PC-9 (cell line): ENCODE measurements at regions of chr7 and their contacts with region 1.

Region 1: GRCh38 chr7:144158861-144159260 is 24.4 kb upstream of the CTAGE4 start:
- DNase-seq: peak in 1 of 2 experiments; percentile 26
- H3K4me3 ChIP-seq: no peak overlapping the region
- H3K27ac ChIP-seq: no peak overlapping the region
- H3K4me1 ChIP-seq: no peaks in the 10 kb centered on the region
- H3K27me3 ChIP-seq: no peaks in the 10 kb centered on the region
- CTCF ChIP-seq: no peak

Region 2: DNA sequence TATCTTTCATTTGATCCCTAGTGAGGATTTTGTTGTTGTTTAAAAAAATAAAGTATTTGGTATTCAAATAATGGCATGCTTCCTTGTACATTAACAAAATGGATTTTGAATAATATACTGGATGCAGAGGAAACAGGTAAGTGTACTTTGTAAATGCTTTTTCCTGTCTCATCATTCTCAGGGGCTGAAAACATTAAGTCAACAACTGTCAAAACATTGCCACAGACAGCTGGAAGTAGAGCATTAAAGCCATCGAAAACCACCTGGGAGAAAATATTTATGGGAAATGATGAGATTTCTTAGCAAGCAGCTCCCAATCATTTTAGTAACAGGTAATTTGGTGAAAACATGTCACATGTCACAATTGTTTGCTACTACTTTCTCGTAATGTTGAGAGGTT is 965.0 kb before region 1 on chr7:
- CTCF ChIA-PET with region 1: no interaction called
- POLR2A ChIA-PET with region 1: no interaction called
- intact Hi-C with region 1: loop called (anchors 5 kb)
- DNase-seq: no peak
- H3K4me3 ChIP-seq: no peak overlapping the region
- H3K27ac ChIP-seq: no peak overlapping the region
- H3K4me1 ChIP-seq: no peaks in the 10 kb centered on the region
- H3K27me3 ChIP-seq: no peaks in the 10 kb centered on the region
- CTCF ChIP-seq: no peak